Body of pancreas (tissue), 4 donors: ENCODE measurements at regions of chr22 and their contacts with region 1.

Region 1: DNA sequence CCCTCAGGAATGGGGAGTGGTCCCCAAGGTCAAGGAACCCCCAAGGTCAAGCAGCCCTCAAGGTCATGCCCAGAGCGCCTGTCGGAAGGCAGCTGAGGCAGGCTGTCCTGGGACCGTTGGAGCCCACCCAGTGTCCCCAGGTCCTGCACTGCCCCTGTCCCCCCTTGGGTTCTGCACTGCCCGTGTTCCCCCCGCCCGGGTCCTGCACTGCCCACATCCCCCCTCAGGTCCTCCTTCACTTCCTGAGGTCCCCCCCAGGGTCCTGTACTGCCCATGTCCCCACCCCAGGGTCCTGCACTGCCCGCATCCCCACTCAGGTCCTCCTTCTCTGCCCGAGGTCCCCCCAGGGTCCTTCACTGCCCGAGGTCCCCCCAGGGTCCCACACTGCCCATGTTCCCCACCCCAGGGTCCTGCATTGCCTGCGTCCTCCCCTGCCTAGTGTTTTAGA is 1073.0 kb downstream of the BRD1 start:
- DNase-seq: no peak
- ATAC-seq: no peak
- H3K4me3 ChIP-seq: no peak overlapping the region
- H3K27ac ChIP-seq: no peak overlapping the region
- H3K4me1 ChIP-seq: no peaks in the 10 kb centered on the region
- H3K27me3 ChIP-seq: no peaks in the 10 kb centered on the region
- CTCF ChIP-seq: no peak
- POLR2A ChIP-seq: no peak

Region 2: GRCh38 chr22:48520884-48521588 is 233.6 kb before region 1 on chr22:
- intact Hi-C with region 1: no loop called
- DNase-seq: no peak
- ATAC-seq: no peak
- H3K4me3 ChIP-seq: no peak overlapping the region
- H3K27ac ChIP-seq: no peak overlapping the region
- H3K4me1 ChIP-seq: no peaks in the 10 kb centered on the region
- H3K27me3 ChIP-seq: peaks cover 0 to 3% of the 10 kb centered on the region in 2 donors
- CTCF ChIP-seq: no peak
- POLR2A ChIP-seq: no peak

Region 3: GRCh38 chr22:48804811-48805301 is 50.2 kb after region 1 on chr22:
- intact Hi-C with region 1: loop called (anchors 5 kb)
- DNase-seq: no peak
- ATAC-seq: no peak
- H3K4me3 ChIP-seq: no peak overlapping the region
- H3K27ac ChIP-seq: no peak overlapping the region
- H3K4me1 ChIP-seq: no peaks in the 10 kb centered on the region
- H3K27me3 ChIP-seq: no peaks in the 10 kb centered on the region
- CTCF ChIP-seq: no peak
- POLR2A ChIP-seq: no peak